IMR-90 (cell line): ENCODE measurements at regions of chr4 and their contacts with region 1.

Region 1: DNA sequence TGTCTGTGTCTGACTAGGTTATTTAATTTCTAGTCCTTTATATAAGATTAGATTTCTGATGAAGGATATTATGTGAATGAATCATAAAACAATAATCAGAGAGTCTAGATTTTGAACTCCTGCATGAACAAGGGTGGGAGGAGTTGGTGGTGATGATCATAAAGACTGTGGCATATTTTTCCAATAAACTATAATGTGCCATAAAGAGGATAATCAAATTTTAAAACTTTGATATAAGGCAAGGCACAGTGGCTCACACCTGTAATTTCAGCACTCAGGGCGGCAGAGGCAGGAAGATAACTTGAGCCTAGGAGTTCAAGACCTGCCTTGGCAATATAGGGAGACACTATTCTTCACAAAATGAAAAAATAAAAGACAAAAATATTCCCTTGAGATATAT is 473.3 kb downstream of the GABRG1 start:
- DNase-seq: no peak
- ATAC-seq: no peak
- H3K4me3 ChIP-seq: no peak overlapping the region
- H3K27ac ChIP-seq: no peak overlapping the region
- H3K4me1 ChIP-seq: no peaks in the 10 kb centered on the region
- H3K27me3 ChIP-seq: no peaks in the 10 kb centered on the region
- CTCF ChIP-seq: no peak
- POLR2A ChIP-seq: no peak
- RAD21 ChIP-seq: no peak

Region 2: DNA sequence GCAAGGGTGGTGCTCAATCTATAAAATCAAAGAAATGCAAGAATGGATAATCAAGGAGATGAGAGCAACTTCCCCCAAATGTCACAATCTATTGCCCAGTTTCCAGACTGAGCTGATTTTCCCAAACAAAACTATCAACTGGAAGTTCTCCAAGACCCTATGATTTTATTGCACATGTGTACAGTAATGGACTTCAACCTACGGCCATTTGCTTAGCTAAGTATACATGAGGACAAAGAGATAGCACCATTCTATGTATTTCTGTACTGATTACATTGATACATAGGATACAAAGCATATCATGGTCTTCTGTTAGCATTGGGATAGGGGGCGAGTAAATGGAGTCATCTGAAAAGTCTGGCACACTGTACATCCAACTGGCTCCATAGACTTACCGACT is 65.5 kb after region 1 on chr4:
- CTCF ChIA-PET with region 1: no interaction called
- POLR2A ChIA-PET with region 1: no interaction called
- dilution Hi-C with region 1: no loop called
- in situ Hi-C with region 1: no loop called
- intact Hi-C with region 1: loop called (anchors 10 kb)
- DNase-seq: no peak
- ATAC-seq: no peak
- H3K4me3 ChIP-seq: no peak overlapping the region
- H3K27ac ChIP-seq: no peak overlapping the region
- H3K4me1 ChIP-seq: no peaks in the 10 kb centered on the region
- H3K27me3 ChIP-seq: no peaks in the 10 kb centered on the region
- CTCF ChIP-seq: no peak
- POLR2A ChIP-seq: no peak
- RAD21 ChIP-seq: no peak